ENCODE measurements at regions of chrX and their contacts with region 1.

Region 1: GRCh38 chrX:119721487-119721886 is 28.5 kb upstream of the SEPTIN6 start:
- DNase-seq: no peak
- H3K4me3 ChIP-seq: no peak overlapping the region
- H3K27ac ChIP-seq: no peak overlapping the region
- H3K4me1 ChIP-seq: no peaks in the 10 kb centered on the region
- H3K27me3 ChIP-seq: no peaks in the 10 kb centered on the region
- CTCF ChIP-seq: no peak

Region 2: GRCh38 chrX:119698845-119699244 is 22.6 kb before region 1 on chrX:
- CTCF ChIA-PET with region 1: interaction called, 3 read pairs
- POLR2A ChIA-PET with region 1: no interaction called
- intact Hi-C with region 1: loop called (anchors 1 kb)
- DNase-seq: peak; percentile 35 to 63
- H3K4me3 ChIP-seq: no peak overlapping the region
- H3K27ac ChIP-seq: no peak overlapping the region
- H3K4me1 ChIP-seq: no peaks in the 10 kb centered on the region
- H3K27me3 ChIP-seq: peaks cover 2% of the 10 kb centered on the region; the same call in 1 of the 2 replicates
- CTCF ChIP-seq: peak; percentile 75

Region 3: GRCh38 chrX:119826399-119826959 is 105.0 kb after region 1 on chrX:
- CTCF ChIA-PET with region 1: no interaction called
- POLR2A ChIA-PET with region 1: no interaction called
- intact Hi-C with region 1: no loop called
- DNase-seq: peak in 1 of 2 experiments; percentile 46
- H3K4me3 ChIP-seq: no peak overlapping the region
- H3K27ac ChIP-seq: no peak overlapping the region
- H3K4me1 ChIP-seq: peaks cover 8% of the 10 kb centered on the region
- H3K27me3 ChIP-seq: no peaks in the 10 kb centered on the region
- CTCF ChIP-seq: no peak

Region 4: DNA sequence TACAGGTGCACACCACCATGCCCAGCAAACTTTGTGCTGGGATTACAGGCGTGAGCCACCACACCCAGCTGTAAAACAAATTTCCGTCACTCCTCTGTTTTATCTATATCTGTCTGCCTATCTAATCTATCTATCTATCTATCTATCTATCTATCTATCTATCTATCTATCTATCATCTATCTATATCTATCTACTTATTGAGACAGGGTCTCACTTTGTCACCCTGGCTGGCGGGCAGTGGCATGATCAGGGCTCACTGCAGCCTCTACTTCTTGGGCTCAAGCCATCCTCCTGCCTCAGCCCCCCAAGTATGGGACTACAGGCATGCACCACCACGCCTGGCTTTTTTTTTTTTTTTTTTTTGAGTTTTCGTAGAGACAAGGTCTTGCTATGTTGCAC is 194.8 kb after region 1 on chrX:
- CTCF ChIA-PET with region 1: no interaction called
- POLR2A ChIA-PET with region 1: no interaction called
- intact Hi-C with region 1: no loop called
- DNase-seq: no peak
- H3K4me3 ChIP-seq: no peak overlapping the region
- H3K27ac ChIP-seq: no peak overlapping the region
- H3K4me1 ChIP-seq: no peaks in the 10 kb centered on the region
- H3K27me3 ChIP-seq: no peaks in the 10 kb centered on the region
- CTCF ChIP-seq: no peak

Measured in PC-9 (cell line).